ENCODE measurements at regions of chr3 and their contacts with region 1.

Region 1: GRCh38 chr3:141460097-141460704 is 26.6 kb upstream of the RASA2 start:
- DNase-seq: peak; percentile 96
- ATAC-seq: peak; percentile 100
- H3K4me3 Mint-ChIP-seq: no peak overlapping the region
- H3K27ac Mint-ChIP-seq: no peak overlapping the region
- H3K4me1 Mint-ChIP-seq: peaks cover 7% of the 10 kb centered on the region
- H3K27me3 Mint-ChIP-seq: no peaks in the 10 kb centered on the region

Region 2: DNA sequence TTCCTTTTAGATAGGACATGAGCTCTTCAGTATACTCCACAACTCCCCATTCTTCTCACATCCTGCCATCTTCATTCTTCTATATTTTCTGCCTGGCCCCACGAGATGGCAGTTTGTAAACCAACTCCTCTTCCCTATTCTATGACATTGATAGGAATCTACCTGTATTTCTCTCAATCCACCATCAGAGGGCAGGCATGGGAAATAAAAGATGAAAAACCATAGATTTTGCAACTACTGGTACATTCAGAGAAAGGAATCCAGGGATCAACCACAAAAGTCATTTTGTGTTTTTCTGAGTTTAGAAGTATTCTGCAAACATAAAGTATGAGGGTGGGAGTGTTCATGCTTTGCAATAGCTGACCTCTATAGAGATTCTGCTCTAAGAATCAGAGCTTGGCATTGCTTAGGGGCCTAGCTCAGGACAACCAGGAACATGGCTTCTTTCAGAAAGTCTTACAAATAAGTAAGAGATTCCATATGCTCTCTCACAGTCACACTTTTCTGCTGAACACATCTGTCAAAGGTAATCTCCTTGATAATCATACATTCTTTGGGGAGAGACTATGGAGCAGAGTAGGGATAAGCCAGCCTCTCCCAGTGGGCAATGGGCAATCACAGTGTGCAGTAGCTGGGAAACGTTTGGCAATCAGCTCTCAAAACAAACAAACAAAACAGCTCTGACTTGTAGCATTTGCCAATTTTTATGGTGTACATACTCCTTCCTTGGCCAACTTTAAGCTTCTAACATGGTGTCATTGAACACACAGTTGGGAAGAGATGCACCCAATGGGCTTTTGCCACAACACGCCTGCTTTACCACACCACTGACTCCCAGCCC is 561.6 kb before region 1 on chr3:
- CTCF ChIA-PET with region 1: no interaction called
- POLR2A ChIA-PET with region 1: no interaction called
- intact Hi-C with region 1: no loop called
- DNase-seq: peak; percentile 11
- ATAC-seq: peak; percentile 66
- H3K4me3 Mint-ChIP-seq: no peak overlapping the region
- H3K27ac Mint-ChIP-seq: no peak overlapping the region
- H3K4me1 Mint-ChIP-seq: no peaks in the 10 kb centered on the region
- H3K27me3 Mint-ChIP-seq: peaks cover 11% of the 10 kb centered on the region

Region 3: GRCh38 chr3:141360888-141361598 is 99.2 kb before region 1 on chr3:
- CTCF ChIA-PET with region 1: interaction called, 96 read pairs
- POLR2A ChIA-PET with region 1: no interaction called
- intact Hi-C with region 1: no loop called
- DNase-seq: no peak
- ATAC-seq: peak; percentile 87
- H3K4me3 Mint-ChIP-seq: peak overlapping the region; percentile 20
- H3K27ac Mint-ChIP-seq: peak overlapping the region; percentile 55
- H3K4me1 Mint-ChIP-seq: peaks cover 9% of the 10 kb centered on the region
- H3K27me3 Mint-ChIP-seq: no peaks in the 10 kb centered on the region

Region 4: GRCh38 chr3:141561426-141562034 is 101.3 kb after region 1 on chr3:
- CTCF ChIA-PET with region 1: interaction called, 354 read pairs
- POLR2A ChIA-PET with region 1: interaction called, 3 read pairs
- intact Hi-C with region 1: loop called (anchors 1 kb)
- DNase-seq: peak; percentile 40
- ATAC-seq: no peak
- H3K4me3 Mint-ChIP-seq: no peak overlapping the region
- H3K27ac Mint-ChIP-seq: no peak overlapping the region
- H3K4me1 Mint-ChIP-seq: peaks cover 34% of the 10 kb centered on the region
- H3K27me3 Mint-ChIP-seq: no peaks in the 10 kb centered on the region

Region 5: GRCh38 chr3:141644931-141645330 is 184.7 kb after region 1 on chr3:
- CTCF ChIA-PET with region 1: interaction called, 21 read pairs
- POLR2A ChIA-PET with region 1: no interaction called
- intact Hi-C with region 1: loop called (anchors 1 kb)
- DNase-seq: peak; percentile 88
- ATAC-seq: peak; percentile 95
- H3K4me3 Mint-ChIP-seq: no peak overlapping the region
- H3K27ac Mint-ChIP-seq: no peak overlapping the region
- H3K4me1 Mint-ChIP-seq: no peaks in the 10 kb centered on the region
- H3K27me3 Mint-ChIP-seq: no peaks in the 10 kb centered on the region

Region 6: DNA sequence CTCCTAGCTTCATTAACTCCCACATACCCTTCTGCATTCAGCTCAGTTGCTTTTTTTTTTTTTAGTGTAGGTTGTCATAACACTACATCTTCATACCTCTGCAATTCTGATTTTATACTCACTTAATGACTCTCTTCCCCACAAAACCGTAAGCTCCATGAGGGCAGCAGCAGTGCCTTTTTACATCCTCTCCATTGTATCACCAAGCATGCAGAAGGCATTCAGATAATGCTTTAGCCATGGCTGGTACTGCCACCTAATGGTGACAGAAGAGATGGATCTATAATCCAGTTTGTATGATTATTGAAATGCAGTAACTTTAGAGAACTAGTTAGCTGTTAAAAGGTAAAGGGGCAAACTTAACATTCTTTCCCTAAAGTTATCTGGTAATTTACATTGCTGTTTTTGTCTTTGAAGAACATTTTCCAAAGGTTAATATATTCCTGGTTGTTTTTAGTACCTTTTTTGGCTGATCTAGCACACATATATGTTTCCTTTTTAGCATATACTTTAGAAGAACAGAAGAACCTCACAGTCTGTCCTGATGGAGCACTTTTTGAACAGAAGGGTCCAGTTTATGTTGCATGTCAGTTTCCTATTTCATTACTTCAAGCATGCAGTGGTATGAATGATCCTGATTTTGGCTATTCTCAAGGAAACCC is 453.1 kb after region 1 on chr3:
- CTCF ChIA-PET with region 1: interaction called, 5 read pairs
- POLR2A ChIA-PET with region 1: no interaction called
- intact Hi-C with region 1: loop called in 1 of 2 experiments (anchors 2 kb)
- DNase-seq: peak; percentile 70
- ATAC-seq: peak; percentile 93
- H3K4me3 Mint-ChIP-seq: no peak overlapping the region
- H3K27ac Mint-ChIP-seq: no peak overlapping the region
- H3K4me1 Mint-ChIP-seq: no peaks in the 10 kb centered on the region
- H3K27me3 Mint-ChIP-seq: no peaks in the 10 kb centered on the region

Region 7: GRCh38 chr3:142279965-142280590 is 819.9 kb after region 1 on chr3:
- CTCF ChIA-PET with region 1: no interaction called
- POLR2A ChIA-PET with region 1: no interaction called
- intact Hi-C with region 1: loop called in 1 of 2 experiments (anchors 2 kb)
- DNase-seq: peak; percentile 49
- ATAC-seq: peak; percentile 96
- H3K4me3 Mint-ChIP-seq: no peak overlapping the region
- H3K27ac Mint-ChIP-seq: peak overlapping the region; percentile 24
- H3K4me1 Mint-ChIP-seq: peaks cover 7% of the 10 kb centered on the region
- H3K27me3 Mint-ChIP-seq: no peaks in the 10 kb centered on the region